CD14-positive monocyte (primary cell): ENCODE measurements at regions of chr1 and their contacts with region 1.

Region 1: GRCh38 chr1:145885738-145886287 is at the start of gene ANKRD35:
- DNase-seq: peak; percentile 65 to 81 (median 70)
- H3K4me3 ChIP-seq: peak within 1 kb of the TSS; percentile 51 to 95 (median 75)
- H3K4me3 Mint-ChIP-seq: peak within 1 kb of the TSS; percentile 89 to 92
- H3K27ac ChIP-seq: no peak within 1 kb of the TSS
- H3K27ac Mint-ChIP-seq: peak within 1 kb of the TSS in 5 of 7 donors; percentile 31 to 89 (median 82)
- H3K4me1 ChIP-seq: peaks cover 8 to 18% of the 10 kb centered on the region in 2 donors
- H3K4me1 Mint-ChIP-seq: peaks cover 16% of the 10 kb centered on the region
- H3K27me3 ChIP-seq: peaks cover 5 to 14% of the 10 kb centered on the region in 2 donors
- H3K27me3 Mint-ChIP-seq: peaks cover 13 to 24% (median 16%) of the 10 kb centered on the region in 3 donors
- CTCF ChIP-seq: no peak
- polyA plus RNA-seq, gene ANKRD35: 0.40 to 1.5 (median 1.3) TPM

Region 2: DNA sequence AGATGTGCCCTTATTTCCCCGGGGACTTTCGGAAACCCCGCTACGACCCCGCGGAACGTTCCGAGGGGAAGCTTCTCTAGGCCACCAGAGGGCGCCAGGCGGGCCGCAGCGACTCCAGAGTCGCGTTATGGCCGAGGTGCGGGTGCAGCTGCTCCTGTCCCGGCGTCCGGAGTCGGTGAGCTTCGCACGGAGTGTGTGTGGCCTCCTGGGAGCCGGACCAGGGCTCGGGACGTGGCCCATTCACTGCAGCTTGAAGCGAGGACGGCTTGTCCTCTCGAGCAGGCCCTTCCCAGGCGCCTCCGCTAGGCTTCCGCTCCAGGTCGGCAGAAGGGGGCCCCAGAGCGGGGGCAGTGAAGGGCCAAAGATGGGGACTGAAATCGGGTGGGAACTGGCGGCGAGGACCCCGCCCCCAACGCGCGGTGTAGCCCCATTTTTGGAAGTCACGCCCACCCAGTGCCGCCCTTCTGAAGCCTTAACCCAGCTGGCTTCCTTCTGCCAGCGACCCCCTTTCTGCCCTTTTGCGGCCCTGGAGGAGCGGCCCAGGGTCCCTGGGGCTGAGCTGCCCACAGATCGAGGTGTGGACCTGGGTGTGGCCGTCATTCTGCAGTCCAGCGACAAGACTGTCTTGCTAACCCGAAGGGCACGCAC is 40.2 kb before region 1 on chr1 and contains the start of gene NUDT17:
- intact Hi-C with region 1: loop called in 1 of 2 experiments (anchors 5 kb)
- DNase-seq: peak; percentile 64 to 72 (median 71)
- H3K4me3 ChIP-seq: peak within 1 kb of the TSS; percentile 72 to 98 (median 88)
- H3K4me3 Mint-ChIP-seq: no peak within 1 kb of the TSS
- H3K27ac ChIP-seq: peak within 1 kb of the TSS; percentile 63 to 90
- H3K27ac Mint-ChIP-seq: peak within 1 kb of the TSS in 3 of 7 donors; percentile 21 to 69 (median 58)
- H3K4me1 ChIP-seq: peaks cover 19 to 25% of the 10 kb centered on the region in 2 donors
- H3K4me1 Mint-ChIP-seq: peaks cover 6% of the 10 kb centered on the region
- H3K27me3 ChIP-seq: no peaks in the 10 kb centered on the region
- H3K27me3 Mint-ChIP-seq: peaks cover 0 to 3% (median 0%) of the 10 kb centered on the region in 3 donors
- CTCF ChIP-seq: peak; percentile 91
- polyA plus RNA-seq, gene NUDT17: 2.1 to 6.4 (median 3.1) TPM

Region 3: DNA sequence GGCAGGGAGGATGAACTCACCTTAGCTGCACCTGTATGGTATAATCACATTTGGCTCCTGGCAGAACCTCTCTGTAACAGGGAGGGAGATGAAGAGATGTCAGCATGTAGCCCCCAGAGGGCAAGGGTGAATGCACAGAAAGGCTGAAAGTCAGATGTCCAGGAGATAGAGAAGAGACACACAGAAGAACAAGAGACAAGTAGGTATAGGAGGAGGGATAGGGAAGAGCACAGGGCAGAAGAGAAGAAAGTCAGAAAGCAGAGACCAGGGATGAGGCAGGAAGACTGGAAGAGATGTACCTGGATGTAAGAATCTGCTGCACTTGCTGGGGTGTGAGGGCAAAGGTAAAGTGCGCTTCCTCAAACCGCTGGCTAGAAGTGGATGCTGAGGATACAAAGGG is 29.8 kb before region 1 on chr1:
- intact Hi-C with region 1: no loop called
- DNase-seq: no peak
- H3K4me3 ChIP-seq: no peak overlapping the region
- H3K4me3 Mint-ChIP-seq: no peak overlapping the region
- H3K27ac ChIP-seq: no peak overlapping the region
- H3K27ac Mint-ChIP-seq: no peak overlapping the region
- H3K4me1 ChIP-seq: peaks cover 13 to 18% of the 10 kb centered on the region in 2 donors
- H3K4me1 Mint-ChIP-seq: peaks cover 14% of the 10 kb centered on the region
- H3K27me3 ChIP-seq: no peaks in the 10 kb centered on the region
- H3K27me3 Mint-ChIP-seq: no peaks in the 10 kb centered on the region
- CTCF ChIP-seq: no peak